GM12878 (cell line): ENCODE measurements at regions of chr15 and their contacts with region 1.

Region 1: GRCh38 chr15:29765898-29766527 is 56.3 kb downstream of the TJP1 start:
- DNase-seq: no peak
- ATAC-seq: no peak
- H3K4me3 ChIP-seq: no peak overlapping the region
- H3K27ac ChIP-seq: no peak overlapping the region
- H3K4me1 ChIP-seq: no peaks in the 10 kb centered on the region
- H3K27me3 ChIP-seq: no peaks in the 10 kb centered on the region
- CTCF ChIP-seq: no peak
- EP300 ChIP-seq: no peak
- POLR2A ChIP-seq: no peak
- RAD21 ChIP-seq: no peak

Region 2: GRCh38 chr15:29805043-29805707 is 39.2 kb after region 1 on chr15:
- CTCF ChIA-PET with region 1: no interaction called
- POLR2A ChIA-PET with region 1: no interaction called
- RAD21 ChIA-PET with region 1: no interaction called
- SMC1A ChIA-PET with region 1: no interaction called
- in situ Hi-C with region 1: no loop called
- intact Hi-C with region 1: no loop called
- DNase-seq: no peak
- ATAC-seq: no peak
- H3K4me3 ChIP-seq: no peak overlapping the region
- H3K27ac ChIP-seq: no peak overlapping the region
- H3K4me1 ChIP-seq: no peaks in the 10 kb centered on the region
- H3K27me3 ChIP-seq: no peaks in the 10 kb centered on the region
- CTCF ChIP-seq: no peak
- EP300 ChIP-seq: no peak
- POLR2A ChIP-seq: no peak
- RAD21 ChIP-seq: no peak

Region 3: GRCh38 chr15:29821416-29822131 is 55.6 kb after region 1 on chr15:
- CTCF ChIA-PET with region 1: no interaction called
- POLR2A ChIA-PET with region 1: no interaction called
- RAD21 ChIA-PET with region 1: no interaction called
- SMC1A ChIA-PET with region 1: no interaction called
- in situ Hi-C with region 1: no loop called
- intact Hi-C with region 1: loop called (anchors 10 kb)
- DNase-seq: no peak
- ATAC-seq: no peak
- H3K4me3 ChIP-seq: no peak overlapping the region
- H3K27ac ChIP-seq: no peak overlapping the region
- H3K4me1 ChIP-seq: no peaks in the 10 kb centered on the region
- H3K27me3 ChIP-seq: peaks cover 0 to 7% of the 10 kb centered on the region in 2 experiments; a peak in 2 of 4 replicates
- CTCF ChIP-seq: no peak
- EP300 ChIP-seq: no peak
- POLR2A ChIP-seq: no peak
- RAD21 ChIP-seq: no peak